Activated T-helper 1 cell treated with anti-CD3 and anti-CD28 coated beads, Interleukin-12 subunit alpha, Interleukin-12 subunit beta, Interleukin-2, Interleukin-4 antibody, amounts not matched to agents 30 ng/mL and 10 ng/mL and 1 ng/mL, durations not matched to agents 14 hours and 24 hours and 36 hours (primary cell): ENCODE measurements at regions of chr15 and their contacts with region 1.

Region 1: DNA sequence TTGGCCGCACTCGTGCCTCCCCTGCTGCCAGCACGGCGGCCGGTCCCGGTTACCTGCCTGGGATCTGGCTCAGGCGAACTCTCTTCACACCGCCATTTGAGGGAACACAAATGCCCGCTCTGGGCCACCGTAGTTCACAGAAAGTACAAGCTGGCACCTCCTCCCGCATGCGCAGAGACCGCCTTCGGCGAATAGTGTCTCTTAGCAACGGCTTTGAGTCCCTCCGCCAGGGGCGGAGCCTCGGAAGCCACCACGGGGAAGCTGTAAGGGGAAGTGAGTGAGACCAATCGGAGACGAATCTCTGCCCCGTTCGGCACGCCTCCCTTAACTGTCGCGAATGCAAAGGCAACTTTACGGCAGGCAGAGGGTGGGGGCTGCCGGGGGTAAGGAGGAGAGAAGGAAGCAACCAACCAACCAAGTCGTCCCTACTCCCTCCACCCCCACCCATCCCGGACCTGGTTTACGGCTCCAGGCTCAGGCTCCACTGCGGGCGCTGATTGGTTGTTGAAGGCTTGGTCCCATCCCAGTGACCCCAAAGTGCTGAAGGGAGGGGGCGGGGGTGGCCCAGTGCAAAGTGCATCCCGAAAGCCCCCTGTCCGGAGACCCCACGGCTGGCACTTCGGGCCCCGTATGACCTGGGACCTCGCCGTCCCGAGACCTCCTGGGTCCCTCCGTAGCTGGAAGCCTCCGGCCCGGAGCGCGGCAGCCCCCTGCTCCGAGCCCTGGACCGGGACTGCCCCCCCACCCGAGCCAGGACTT is at the starts of genes ASB7 and LINS1:
- DNase-seq: peak; percentile 100
- H3K4me3 Mint-ChIP-seq: no peak within 1 kb of the TSS
- H3K27ac Mint-ChIP-seq: peak within 1 kb of the TSS; percentile 99
- H3K4me1 Mint-ChIP-seq: peaks cover 47% of the 10 kb centered on the region
- H3K27me3 Mint-ChIP-seq: no peaks in the 10 kb centered on the region
- total RNA-seq, gene ASB7: 18.3 and 18.7 TPM in 2 replicates
- total RNA-seq, gene LINS1: 64.1 and 70.5 TPM in 2 replicates

Region 2: GRCh38 chr15:99250494-99251435 is 1351.5 kb before region 1 on chr15:
- intact Hi-C with region 1: loop called (anchors 2 kb)
- DNase-seq: peak; percentile 96
- H3K4me3 Mint-ChIP-seq: peak overlapping the region; percentile 89
- H3K27ac Mint-ChIP-seq: peak overlapping the region; percentile 82
- H3K4me1 Mint-ChIP-seq: peaks cover 31% of the 10 kb centered on the region
- H3K27me3 Mint-ChIP-seq: no peaks in the 10 kb centered on the region

Region 3: DNA sequence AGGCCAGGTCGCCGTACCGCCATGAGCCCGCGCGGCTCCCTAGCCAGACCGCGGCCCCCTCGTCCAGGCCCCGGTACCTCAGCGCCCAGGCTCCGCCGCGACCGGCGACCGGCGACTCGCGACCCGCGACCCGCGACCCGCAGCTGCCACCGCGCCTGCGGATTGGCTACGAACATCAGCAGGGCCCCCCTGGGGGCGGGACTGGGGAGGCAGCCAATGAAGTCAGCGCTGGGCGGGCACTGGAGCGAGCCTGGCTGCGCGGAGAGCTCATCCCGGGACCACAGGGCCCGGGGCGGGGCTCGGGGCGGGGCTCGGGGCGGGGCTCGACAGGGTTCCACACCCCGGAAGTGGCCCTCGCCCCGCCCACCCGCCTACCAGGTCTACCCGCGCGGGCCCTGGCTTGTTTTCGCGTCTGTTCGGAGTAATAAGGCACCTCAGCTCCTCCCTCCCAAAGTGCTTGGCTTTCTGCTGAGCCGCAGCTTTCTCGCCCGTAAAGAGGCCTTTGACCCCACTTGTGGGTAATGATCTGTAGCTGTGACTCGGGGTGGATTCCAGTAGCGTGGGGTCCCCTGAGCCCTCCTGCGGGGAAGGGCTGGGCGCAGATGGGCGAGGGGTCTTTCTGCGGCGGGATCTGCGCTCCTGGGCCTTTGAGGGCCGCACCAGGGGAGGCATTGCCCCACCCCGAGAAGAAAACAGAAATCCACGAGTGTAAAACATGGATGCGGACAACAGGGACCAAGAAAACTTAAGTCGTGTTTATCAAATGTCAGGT is 868.8 kb before region 1 on chr15 and contains the start of gene LYSMD4:
- intact Hi-C with region 1: loop called (anchors 2 kb)
- DNase-seq: peak; percentile 97
- H3K4me3 Mint-ChIP-seq: peak within 1 kb of the TSS; percentile 86
- H3K27ac Mint-ChIP-seq: peak within 1 kb of the TSS; percentile 88
- H3K4me1 Mint-ChIP-seq: peaks cover 34% of the 10 kb centered on the region
- H3K27me3 Mint-ChIP-seq: no peaks in the 10 kb centered on the region
- total RNA-seq, gene LYSMD4: 10.1 and 10.3 TPM in 2 replicates

Region 4: GRCh38 chr15:101008158-101009139 is 406.2 kb after region 1 on chr15:
- intact Hi-C with region 1: loop called (anchors 1 kb)
- DNase-seq: peak; percentile 80
- H3K4me3 Mint-ChIP-seq: peak overlapping the region; percentile 89
- H3K27ac Mint-ChIP-seq: peak overlapping the region; percentile 18
- H3K4me1 Mint-ChIP-seq: peaks cover 19% of the 10 kb centered on the region
- H3K27me3 Mint-ChIP-seq: peaks cover 21% of the 10 kb centered on the region

Region 5: DNA sequence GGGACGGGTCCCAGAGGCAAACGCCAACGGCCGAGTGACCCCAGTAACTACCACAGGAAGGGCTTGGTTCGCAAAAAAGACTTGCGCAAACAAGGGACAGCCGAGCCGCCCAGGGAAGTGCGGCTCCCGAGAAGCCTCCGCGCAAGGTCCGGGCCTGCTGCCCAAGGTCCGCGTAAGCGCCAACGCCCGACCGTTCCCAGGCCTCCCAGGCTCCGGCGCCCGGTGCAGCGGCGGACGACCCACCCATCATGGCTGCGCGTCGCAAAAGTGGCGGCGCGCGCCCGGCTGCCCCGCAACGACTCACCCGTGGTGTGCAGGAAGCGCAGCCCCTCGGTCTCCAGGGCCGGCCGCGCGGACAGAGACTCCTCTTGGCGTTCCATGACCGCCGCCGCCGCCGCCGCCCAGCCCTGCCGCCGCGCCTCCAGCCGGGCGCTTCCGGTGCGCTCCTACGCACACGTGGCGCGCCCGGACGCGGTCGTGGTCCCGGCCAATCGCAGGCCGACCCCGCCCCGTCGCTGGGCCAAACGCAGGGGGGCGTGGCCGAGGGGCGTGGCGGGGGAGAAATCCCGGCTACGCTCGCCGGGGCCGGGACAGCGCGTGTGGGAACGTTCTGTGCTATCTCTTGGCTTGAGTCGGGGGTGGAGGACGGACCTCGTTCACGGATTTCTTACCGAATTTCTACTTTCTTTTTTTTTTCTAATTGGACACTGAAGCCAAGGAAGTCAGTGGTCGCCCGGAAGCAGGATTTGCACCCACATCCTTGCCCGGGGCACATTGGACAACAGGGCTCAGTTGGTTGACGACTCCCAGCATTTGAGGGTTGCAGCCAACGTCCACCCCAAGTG is 675.0 kb after region 1 on chr15 and contains the start of gene SELENOS:
- intact Hi-C with region 1: loop called (anchors 2 kb)
- DNase-seq: peak; percentile 88
- H3K4me3 Mint-ChIP-seq: peak within 1 kb of the TSS; percentile 98
- H3K27ac Mint-ChIP-seq: peak within 1 kb of the TSS; percentile 88
- H3K4me1 Mint-ChIP-seq: peaks cover 38% of the 10 kb centered on the region
- H3K27me3 Mint-ChIP-seq: no peaks in the 10 kb centered on the region
- total RNA-seq, gene SELENOS: 47.4 and 53.0 TPM in 2 replicates

Region 6: GRCh38 chr15:101723874-101724674 is 1121.8 kb after region 1 on chr15 and contains the start of gene TARS3:
- intact Hi-C with region 1: loop called (anchors 5 kb)
- DNase-seq: peak; percentile 83
- H3K4me3 Mint-ChIP-seq: peak within 1 kb of the TSS; percentile 88
- H3K27ac Mint-ChIP-seq: peak within 1 kb of the TSS; percentile 95
- H3K4me1 Mint-ChIP-seq: peaks cover 30% of the 10 kb centered on the region
- H3K27me3 Mint-ChIP-seq: peaks cover under 1% of the 10 kb centered on the region
- total RNA-seq, gene TARS3: 13.9 and 15.2 TPM in 2 replicates